Psoas muscle (tissue), 8 donors: ENCODE measurements at regions of chr4 and their contacts with region 1.

Region 1: DNA sequence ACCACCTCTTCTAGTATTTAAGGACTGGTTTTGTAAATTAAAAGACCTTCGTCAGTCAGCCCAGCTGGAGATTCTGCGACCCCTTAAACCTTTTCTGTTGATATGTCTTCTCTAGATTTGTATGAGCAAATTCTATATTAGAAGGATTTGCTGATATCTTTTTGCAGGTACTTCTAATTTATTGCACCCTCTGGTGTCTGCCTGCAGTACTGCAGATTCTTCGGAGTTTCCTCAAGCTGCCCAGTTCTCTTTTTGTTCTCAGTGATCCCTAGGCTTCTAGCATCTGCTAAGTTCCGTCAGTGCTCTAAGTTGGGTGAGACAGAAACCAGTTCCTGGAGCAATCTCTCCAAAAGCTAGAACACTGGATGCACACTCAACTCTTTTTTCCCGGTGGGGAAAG is 545.2 kb downstream of the C4orf33 start:
- DNase-seq: peak in 1 of 2 donors; percentile 14
- ATAC-seq: no peak
- H3K4me3 ChIP-seq: no peak overlapping the region
- H3K27ac ChIP-seq: no peak overlapping the region
- H3K4me1 ChIP-seq: no peaks in the 10 kb centered on the region
- H3K27me3 ChIP-seq: no peaks in the 10 kb centered on the region
- CTCF ChIP-seq: peak; percentile 82

Region 2: DNA sequence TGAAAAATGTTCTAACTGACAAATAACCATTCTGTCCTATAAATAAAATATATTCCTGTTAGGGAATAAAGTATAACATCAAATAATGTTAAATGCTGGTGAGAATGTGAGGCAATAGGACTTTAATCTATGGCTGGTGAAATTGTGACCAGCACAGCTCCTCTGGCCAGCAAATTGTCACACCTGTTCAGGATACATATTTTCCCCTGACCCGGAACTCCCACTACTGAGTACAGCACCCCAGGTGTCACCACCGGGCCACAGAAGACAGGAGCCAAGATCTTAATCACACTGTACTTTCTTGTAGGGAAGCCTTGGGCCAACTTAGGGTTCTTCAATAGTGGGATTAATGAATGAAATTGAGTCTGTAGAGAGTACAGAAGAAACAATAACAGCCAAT is 512.0 kb before region 1 on chr4:
- intact Hi-C with region 1: no loop called
- DNase-seq: no peak
- ATAC-seq: no peak
- H3K4me3 ChIP-seq: no peak overlapping the region
- H3K27ac ChIP-seq: no peak overlapping the region
- H3K4me1 ChIP-seq: no peaks in the 10 kb centered on the region
- H3K27me3 ChIP-seq: no peaks in the 10 kb centered on the region
- CTCF ChIP-seq: no peak

Region 3: DNA sequence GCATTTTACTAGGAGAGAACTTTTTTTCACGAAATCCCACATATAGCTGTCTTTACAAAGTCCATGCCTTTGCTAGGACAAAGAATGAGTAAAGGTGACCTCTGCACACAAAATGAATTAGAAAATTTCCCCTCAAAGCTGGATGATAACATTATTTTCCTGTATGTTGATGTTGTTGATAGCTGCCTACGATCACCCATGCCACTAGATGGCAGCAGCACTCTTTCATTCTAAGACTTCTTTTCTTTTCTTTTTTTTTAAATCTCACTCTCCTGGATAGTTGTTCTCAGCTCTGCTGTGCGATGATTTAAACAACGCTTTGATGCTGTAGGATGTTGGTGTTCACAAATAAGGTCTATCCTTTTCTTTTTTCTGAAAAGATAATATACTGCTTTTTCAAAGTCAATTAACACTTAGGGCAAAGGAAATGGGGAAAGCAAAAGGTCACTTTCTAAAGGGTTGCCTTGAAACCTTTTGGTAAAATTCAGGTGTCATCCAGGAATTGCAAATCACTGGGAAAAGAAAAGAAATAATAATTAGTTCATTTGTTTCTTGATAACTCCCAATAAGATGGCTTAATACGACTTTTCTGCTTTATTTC is 278.4 kb before region 1 on chr4:
- intact Hi-C with region 1: loop called (anchors 1 to 5 kb)
- DNase-seq: peak in 1 of 2 donors; percentile 18
- ATAC-seq: peak in 3 of 4 donors; percentile 55 to 61 (median 59)
- H3K4me3 ChIP-seq: no peak overlapping the region
- H3K27ac ChIP-seq: no peak overlapping the region
- H3K4me1 ChIP-seq: no peaks in the 10 kb centered on the region
- H3K27me3 ChIP-seq: no peaks in the 10 kb centered on the region
- CTCF ChIP-seq: peak; percentile 89

Region 4: GRCh38 chr4:129526814-129527213 is 114.4 kb before region 1 on chr4:
- intact Hi-C with region 1: loop called in 1 of 2 experiments (anchors 5 kb)
- DNase-seq: no peak
- ATAC-seq: no peak
- H3K4me3 ChIP-seq: no peak overlapping the region
- H3K27ac ChIP-seq: no peak overlapping the region
- H3K4me1 ChIP-seq: no peaks in the 10 kb centered on the region
- H3K27me3 ChIP-seq: no peaks in the 10 kb centered on the region
- CTCF ChIP-seq: peak; percentile 39